ENCODE measurements at regions of chr19 and their contacts with region 1.

Region 1: GRCh38 chr19:19385108-19385899 is 20.2 kb upstream of the GATAD2A start:
- DNase-seq: peak; percentile 100
- H3K4me3 Mint-ChIP-seq: peak overlapping the region; percentile 87
- H3K27ac Mint-ChIP-seq: peak overlapping the region; percentile 91
- H3K4me1 Mint-ChIP-seq: peaks cover 46% of the 10 kb centered on the region
- H3K27me3 Mint-ChIP-seq: no peaks in the 10 kb centered on the region

Region 2: GRCh38 chr19:19040417-19040816 is 344.9 kb before region 1 on chr19:
- CTCF ChIA-PET with region 1: no interaction called
- POLR2A ChIA-PET with region 1: no interaction called
- DNase-seq: no peak
- H3K4me3 Mint-ChIP-seq: no peak overlapping the region
- H3K27ac Mint-ChIP-seq: no peak overlapping the region
- H3K4me1 Mint-ChIP-seq: peaks cover 24% of the 10 kb centered on the region
- H3K27me3 Mint-ChIP-seq: no peaks in the 10 kb centered on the region

Region 3: DNA sequence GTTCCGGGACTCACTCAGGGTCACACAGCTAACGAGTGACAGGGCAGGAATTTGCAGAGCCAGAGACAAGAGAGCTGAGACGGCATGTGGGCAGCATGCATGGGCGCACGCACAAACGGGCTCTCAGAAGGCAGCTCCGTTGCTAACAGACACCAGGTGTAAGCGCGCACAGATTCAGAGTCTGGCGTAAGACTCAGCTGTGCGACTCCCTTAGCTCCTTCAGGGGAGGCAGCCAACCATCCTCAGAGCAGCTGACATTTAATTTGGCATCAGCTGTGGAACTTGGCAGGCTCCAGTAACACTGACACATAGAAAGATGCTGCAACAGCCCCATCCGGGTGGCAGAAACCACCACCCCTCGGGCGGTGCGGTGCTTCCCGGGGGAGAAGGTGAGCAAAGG is 104.7 kb before region 1 on chr19:
- CTCF ChIA-PET with region 1: no interaction called
- POLR2A ChIA-PET with region 1: no interaction called
- DNase-seq: no peak
- H3K4me3 Mint-ChIP-seq: no peak overlapping the region
- H3K27ac Mint-ChIP-seq: no peak overlapping the region
- H3K4me1 Mint-ChIP-seq: no peaks in the 10 kb centered on the region
- H3K27me3 Mint-ChIP-seq: no peaks in the 10 kb centered on the region

Region 4: GRCh38 chr19:19372656-19373416 is 12.5 kb before region 1 on chr19:
- CTCF ChIA-PET with region 1: no interaction called
- POLR2A ChIA-PET with region 1: interaction called, 11 read pairs
- DNase-seq: peak; percentile 67
- H3K4me3 Mint-ChIP-seq: peak overlapping the region; percentile 19
- H3K27ac Mint-ChIP-seq: peak overlapping the region; percentile 92
- H3K4me1 Mint-ChIP-seq: peaks cover 14% of the 10 kb centered on the region
- H3K27me3 Mint-ChIP-seq: no peaks in the 10 kb centered on the region

Measured in activated CD4-positive, alpha-beta memory T cell treated with anti-CD3 and anti-CD28 coated beads, Interleukin-2, amount 10 ng/mL, durations not matched to agents 7 days and 5 days (primary cell).